ENCODE measurements at regions of chr20 and their contacts with region 1.

Region 1: GRCh38 chr20:47379433-47380150 is 23.1 kb upstream of the ZMYND8 start:
- DNase-seq: no peak
- ATAC-seq: no peak
- H3K4me3 ChIP-seq: no peak overlapping the region
- H3K4me3 Mint-ChIP-seq: no peak overlapping the region
- H3K27ac ChIP-seq: no peak overlapping the region
- H3K27ac Mint-ChIP-seq: no peak overlapping the region
- H3K4me1 ChIP-seq: peaks cover 7 to 10% of the 10 kb centered on the region in 2 donors
- H3K4me1 Mint-ChIP-seq: peaks cover 10% of the 10 kb centered on the region
- H3K27me3 ChIP-seq: no peaks in the 10 kb centered on the region
- H3K27me3 Mint-ChIP-seq: no peaks in the 10 kb centered on the region
- CTCF ChIP-seq: no peak

Region 2: DNA sequence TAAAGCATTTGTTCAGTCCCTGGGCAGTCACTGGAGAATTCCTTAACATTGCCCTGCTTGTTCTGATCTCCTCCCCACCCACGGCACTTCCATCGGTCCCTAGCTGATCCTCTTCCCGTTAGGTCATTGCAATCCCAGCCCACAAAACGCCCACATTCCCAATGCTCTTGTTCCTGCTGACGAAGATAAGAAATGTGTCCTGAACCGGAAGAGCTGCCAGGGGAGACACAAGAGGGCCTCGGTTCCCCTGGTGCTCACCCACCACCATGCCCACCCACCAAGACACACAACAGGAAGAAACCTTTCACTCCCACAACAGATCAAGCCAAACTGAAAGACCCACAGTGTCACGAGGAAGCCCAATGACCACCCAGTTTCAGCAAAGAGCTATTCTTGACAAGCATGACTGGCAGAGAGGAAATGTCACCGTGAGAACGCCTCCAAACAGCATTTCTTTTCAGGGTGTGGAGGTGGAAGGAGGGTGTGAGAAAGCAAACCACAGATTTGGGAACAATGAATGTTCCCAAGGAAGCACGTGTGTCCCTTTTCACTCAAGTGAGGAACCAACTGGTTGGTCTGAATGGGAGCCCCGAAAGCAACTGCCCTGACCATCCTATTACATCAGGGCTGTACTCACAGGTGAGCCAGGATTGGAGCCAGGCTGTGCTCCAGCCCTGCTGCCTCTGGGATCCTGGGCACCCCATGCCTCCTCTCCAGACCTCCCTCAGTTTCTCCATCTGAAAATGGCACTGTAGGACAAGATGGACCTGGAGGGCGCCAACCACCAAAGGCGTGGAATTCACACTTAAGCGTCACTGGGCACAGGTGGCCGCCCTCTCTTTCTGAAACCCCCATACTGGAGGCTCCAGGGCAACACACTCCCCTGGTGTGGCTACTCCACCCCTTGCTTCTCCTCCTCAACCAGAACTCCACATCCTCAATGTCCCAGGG is 120.6 kb before region 1 on chr20:
- CTCF ChIA-PET with region 1: interaction called, 57 read pairs
- POLR2A ChIA-PET with region 1: interaction called, 5 read pairs
- intact Hi-C with region 1: no loop called
- DNase-seq: peak; percentile 78
- ATAC-seq: peak; percentile 31
- H3K4me3 ChIP-seq: peak overlapping the region in 1 of 5 experiments; percentile 8
- H3K4me3 Mint-ChIP-seq: peak overlapping the region; percentile 81
- H3K27ac ChIP-seq: peak overlapping the region; percentile 75 to 78
- H3K27ac Mint-ChIP-seq: peak overlapping the region; percentile 93
- H3K4me1 ChIP-seq: peaks cover 53 to 62% of the 10 kb centered on the region in 2 donors
- H3K4me1 Mint-ChIP-seq: peaks cover 69% of the 10 kb centered on the region
- H3K27me3 ChIP-seq: no peaks in the 10 kb centered on the region
- H3K27me3 Mint-ChIP-seq: no peaks in the 10 kb centered on the region
- CTCF ChIP-seq: no peak

Region 3: GRCh38 chr20:47317127-47317895 is 62.3 kb before region 1 on chr20:
- CTCF ChIA-PET with region 1: interaction called, 27 read pairs
- POLR2A ChIA-PET with region 1: no interaction called
- intact Hi-C with region 1: no loop called
- DNase-seq: peak; percentile 22
- ATAC-seq: peak; percentile 45
- H3K4me3 ChIP-seq: no peak overlapping the region
- H3K4me3 Mint-ChIP-seq: peak overlapping the region; percentile 34
- H3K27ac ChIP-seq: peak overlapping the region; percentile 21 to 65
- H3K27ac Mint-ChIP-seq: peak overlapping the region; percentile 79
- H3K4me1 ChIP-seq: peaks cover 31 to 34% of the 10 kb centered on the region in 2 donors
- H3K4me1 Mint-ChIP-seq: peaks cover 62% of the 10 kb centered on the region
- H3K27me3 ChIP-seq: no peaks in the 10 kb centered on the region
- H3K27me3 Mint-ChIP-seq: no peaks in the 10 kb centered on the region
- CTCF ChIP-seq: no peak

Region 4: GRCh38 chr20:47392015-47392720 is 12.6 kb after region 1 on chr20:
- CTCF ChIA-PET with region 1: interaction called, 13 read pairs
- POLR2A ChIA-PET with region 1: interaction called, 4 read pairs
- intact Hi-C with region 1: no loop called
- DNase-seq: peak; percentile 54
- ATAC-seq: peak; percentile 71
- H3K4me3 ChIP-seq: no peak overlapping the region
- H3K4me3 Mint-ChIP-seq: peak overlapping the region; percentile 57
- H3K27ac ChIP-seq: peak overlapping the region; percentile 46 to 52
- H3K27ac Mint-ChIP-seq: peak overlapping the region; percentile 83
- H3K4me1 ChIP-seq: peaks cover 28 to 34% of the 10 kb centered on the region in 2 donors
- H3K4me1 Mint-ChIP-seq: peaks cover 37% of the 10 kb centered on the region
- H3K27me3 ChIP-seq: no peaks in the 10 kb centered on the region
- H3K27me3 Mint-ChIP-seq: no peaks in the 10 kb centered on the region
- CTCF ChIP-seq: no peak

Region 5: GRCh38 chr20:47468290-47469050 is 88.9 kb after region 1 on chr20:
- CTCF ChIA-PET with region 1: interaction called, 16 read pairs
- POLR2A ChIA-PET with region 1: no interaction called
- intact Hi-C with region 1: no loop called
- DNase-seq: peak; percentile 84
- ATAC-seq: peak; percentile 81
- H3K4me3 ChIP-seq: peak overlapping the region in 2 of 5 experiments; percentile 8 to 38
- H3K4me3 Mint-ChIP-seq: peak overlapping the region; percentile 68
- H3K27ac ChIP-seq: peak overlapping the region; percentile 66 to 79
- H3K27ac Mint-ChIP-seq: peak overlapping the region; percentile 95
- H3K4me1 ChIP-seq: peaks cover 42 to 55% of the 10 kb centered on the region in 2 donors
- H3K4me1 Mint-ChIP-seq: peaks cover 48% of the 10 kb centered on the region
- H3K27me3 ChIP-seq: no peaks in the 10 kb centered on the region
- H3K27me3 Mint-ChIP-seq: no peaks in the 10 kb centered on the region
- CTCF ChIP-seq: no peak

Region 6: DNA sequence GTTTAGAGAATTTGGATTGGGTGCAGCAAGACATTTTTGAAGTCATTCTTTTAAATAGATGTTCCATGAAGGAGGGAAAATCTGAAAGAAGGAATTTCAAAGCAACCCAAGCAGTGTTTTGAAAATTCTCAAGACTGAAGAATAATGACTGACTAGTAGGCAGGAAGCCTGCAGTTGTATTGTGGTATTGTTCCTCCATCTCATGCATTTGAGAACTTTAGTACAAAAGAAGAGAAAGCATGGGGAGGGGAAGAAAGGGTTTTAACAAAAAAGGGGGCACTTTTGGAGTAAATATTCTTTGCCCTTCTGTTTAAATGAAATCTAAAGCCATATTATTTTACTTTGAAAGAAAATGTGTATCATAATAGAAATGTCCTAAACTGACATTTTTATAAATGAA is 128.7 kb after region 1 on chr20:
- CTCF ChIA-PET with region 1: interaction called, 87 read pairs
- POLR2A ChIA-PET with region 1: interaction called, 7 read pairs
- intact Hi-C with region 1: loop called (anchors 2 kb)
- DNase-seq: no peak
- ATAC-seq: no peak
- H3K4me3 ChIP-seq: peak overlapping the region in 1 of 5 experiments; percentile 33
- H3K4me3 Mint-ChIP-seq: peak overlapping the region; percentile 59
- H3K27ac ChIP-seq: peak overlapping the region in 1 of 2 donors; percentile 76
- H3K27ac Mint-ChIP-seq: peak overlapping the region; percentile 63
- H3K4me1 ChIP-seq: peaks cover 72 to 83% of the 10 kb centered on the region in 2 donors
- H3K4me1 Mint-ChIP-seq: peaks cover 70% of the 10 kb centered on the region
- H3K27me3 ChIP-seq: no peaks in the 10 kb centered on the region
- H3K27me3 Mint-ChIP-seq: no peaks in the 10 kb centered on the region
- CTCF ChIP-seq: no peak

Region 7: GRCh38 chr20:47620808-47621805 is 241.5 kb after region 1 on chr20:
- CTCF ChIA-PET with region 1: interaction called, 79 read pairs
- POLR2A ChIA-PET with region 1: no interaction called
- intact Hi-C with region 1: loop called (anchors 1 kb)
- DNase-seq: peak; percentile 68
- ATAC-seq: peak; percentile 31
- H3K4me3 ChIP-seq: no peak overlapping the region
- H3K4me3 Mint-ChIP-seq: no peak overlapping the region
- H3K27ac ChIP-seq: peak overlapping the region in 1 of 2 donors; percentile 72
- H3K27ac Mint-ChIP-seq: peak overlapping the region; percentile 28
- H3K4me1 ChIP-seq: peaks cover 6 to 8% of the 10 kb centered on the region in 2 donors
- H3K4me1 Mint-ChIP-seq: peaks cover 30% of the 10 kb centered on the region
- H3K27me3 ChIP-seq: no peaks in the 10 kb centered on the region
- H3K27me3 Mint-ChIP-seq: no peaks in the 10 kb centered on the region
- CTCF ChIP-seq: peak; percentile 94

Measured in B cell (primary cell).